ENCODE measurements at regions of chr2 and their contacts with region 1.

Region 1: GRCh38 chr2:126527836-126528507 is 128.0 kb upstream of the GYPC start:
- DNase-seq: no peak
- H3K4me3 ChIP-seq: no peak overlapping the region
- H3K27ac ChIP-seq: no peak overlapping the region
- H3K4me1 ChIP-seq: no peaks in the 10 kb centered on the region
- H3K27me3 ChIP-seq: no peaks in the 10 kb centered on the region
- CTCF ChIP-seq: peak in 2 of 4 experiments; percentile 23 to 30
- POLR2A ChIP-seq: no peak

Region 2: GRCh38 chr2:126302043-126302442 is 225.9 kb before region 1 on chr2:
- intact Hi-C with region 1: no loop called
- DNase-seq: no peak
- H3K4me3 ChIP-seq: no peak overlapping the region
- H3K27ac ChIP-seq: no peak overlapping the region
- H3K4me1 ChIP-seq: no peaks in the 10 kb centered on the region
- H3K27me3 ChIP-seq: no peaks in the 10 kb centered on the region
- CTCF ChIP-seq: no peak
- POLR2A ChIP-seq: no peak

Region 3: DNA sequence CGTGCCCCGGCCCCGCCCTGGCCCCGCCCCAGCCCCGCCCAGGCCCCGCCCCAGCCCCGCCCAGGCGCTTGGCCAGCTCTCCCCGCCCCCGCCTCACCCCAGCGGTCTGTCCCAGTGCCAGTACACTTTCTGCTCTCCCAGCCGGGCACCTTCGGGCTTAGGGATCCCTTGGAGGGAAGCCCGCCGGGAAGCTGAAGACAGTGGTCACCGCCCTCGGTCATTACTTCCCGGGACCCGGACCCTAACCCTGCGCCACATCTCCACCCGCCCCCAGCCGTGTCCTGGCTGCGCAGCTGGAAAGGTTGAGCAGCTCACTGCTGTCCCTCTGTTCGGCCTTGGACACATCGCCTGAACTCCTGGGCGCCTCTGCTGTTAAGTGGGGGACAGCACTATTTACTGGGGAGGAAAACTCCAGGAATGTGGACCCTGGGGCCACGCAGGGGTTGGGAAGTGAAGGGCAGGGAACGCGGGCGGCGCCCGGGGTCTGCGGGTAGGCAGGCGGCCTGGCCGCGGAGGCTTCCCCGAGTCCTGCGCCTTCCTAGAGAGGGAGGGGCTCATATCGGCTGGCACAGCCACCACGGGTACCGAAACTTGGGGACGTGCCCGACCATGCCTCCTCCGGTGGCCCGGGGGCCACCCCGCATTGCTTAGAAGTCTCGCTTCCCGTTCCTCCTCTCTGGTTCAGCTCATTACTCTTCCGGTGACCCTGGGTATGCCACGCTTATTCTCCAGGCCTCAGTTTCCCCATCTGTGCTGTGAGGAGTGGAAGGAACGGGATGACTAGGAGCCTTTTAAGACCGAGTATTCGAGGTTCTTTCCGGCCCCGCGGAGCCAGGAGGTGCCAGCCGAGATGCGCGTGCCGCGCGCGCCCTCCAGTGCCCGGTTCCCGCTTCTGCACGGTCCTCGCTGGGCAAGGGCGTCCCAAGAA is 249.0 kb after region 1 on chr2:
- intact Hi-C with region 1: loop called (anchors 2 kb)
- DNase-seq: peak; percentile 63
- H3K4me3 ChIP-seq: peak overlapping the region; percentile 32 to 34
- H3K27ac ChIP-seq: peak overlapping the region in 1 of 2 donors; percentile 39
- H3K4me1 ChIP-seq: no peaks in the 10 kb centered on the region
- H3K27me3 ChIP-seq: no peaks in the 10 kb centered on the region
- CTCF ChIP-seq: peak; percentile 55 to 84 (median 72)
- POLR2A ChIP-seq: no peak